Tibial artery (tissue), 4 donors: ENCODE measurements at regions of chr1 and their contacts with region 1.

Region 1: GRCh38 chr1:32351399-32352238 is 10.7 kb downstream of the FAM229A start:
- DNase-seq: peak; percentile 94 to 96
- H3K4me3 ChIP-seq: peak overlapping the region; percentile 59 to 84
- H3K27ac ChIP-seq: peak overlapping the region; percentile 86 to 94
- H3K4me1 ChIP-seq: peaks cover 0 to 21% (median 20%) of the 10 kb centered on the region in 4 donors
- H3K27me3 ChIP-seq: no peaks in the 10 kb centered on the region
- CTCF ChIP-seq: no peak

Region 2: GRCh38 chr1:32138943-32139342 is 212.7 kb before region 1 on chr1:
- intact Hi-C with region 1: no loop called
- DNase-seq: no peak
- H3K4me3 ChIP-seq: no peak overlapping the region
- H3K27ac ChIP-seq: no peak overlapping the region
- H3K4me1 ChIP-seq: peaks cover 0 to 26% (median 10%) of the 10 kb centered on the region in 4 donors
- H3K27me3 ChIP-seq: no peaks in the 10 kb centered on the region
- CTCF ChIP-seq: no peak

Region 3: DNA sequence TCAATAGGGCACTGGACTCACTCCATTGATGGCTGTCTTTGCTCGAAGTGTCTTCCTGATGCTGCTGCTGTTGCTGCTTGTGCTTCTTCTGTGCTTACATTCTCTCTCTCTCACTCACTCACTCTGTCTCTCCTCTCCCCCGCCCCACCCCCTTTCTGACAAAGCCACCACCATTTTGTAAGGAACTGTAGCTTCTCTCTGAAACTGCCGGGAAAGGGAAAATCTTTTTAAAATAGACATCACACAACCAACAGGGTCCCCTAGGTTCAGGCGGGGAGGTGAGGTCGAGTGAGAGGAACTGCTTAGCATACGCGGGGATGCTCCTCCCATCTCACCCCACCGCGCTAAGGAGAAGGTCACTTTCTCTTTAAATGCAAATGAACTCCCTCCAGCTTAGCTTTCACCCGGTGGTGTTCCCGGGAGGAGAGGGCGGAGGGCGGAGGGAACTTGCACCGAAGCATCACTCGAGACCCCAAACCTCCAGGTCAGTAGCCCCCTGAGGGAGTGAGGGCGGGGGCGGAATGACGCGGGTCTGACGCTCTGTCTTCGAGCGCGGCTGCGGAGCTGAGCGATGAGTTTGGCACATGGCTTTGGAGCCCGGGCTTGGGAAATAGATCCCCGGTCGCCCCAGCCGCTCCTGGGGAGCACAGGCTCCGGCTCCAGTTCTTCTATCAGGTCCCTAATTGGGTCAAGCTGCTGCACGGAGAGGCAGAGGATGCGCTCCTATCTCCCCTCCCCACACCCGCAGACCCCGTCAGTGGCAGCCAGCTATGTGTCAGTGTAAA is 151.2 kb before region 1 on chr1 and contains the start of gene CCDC28B:
- intact Hi-C with region 1: loop called (anchors 5 kb)
- DNase-seq: peak; percentile 62 to 87
- H3K4me3 ChIP-seq: peak within 1 kb of the TSS; percentile 58 to 70
- H3K27ac ChIP-seq: peak within 1 kb of the TSS; percentile 71 to 73
- H3K4me1 ChIP-seq: peaks cover 3 to 37% (median 28%) of the 10 kb centered on the region in 4 donors
- H3K27me3 ChIP-seq: no peaks in the 10 kb centered on the region
- CTCF ChIP-seq: no peak

Region 4: GRCh38 chr1:32247983-32248889 is 103.4 kb before region 1 on chr1:
- intact Hi-C with region 1: no loop called
- DNase-seq: peak; percentile 89 to 90
- H3K4me3 ChIP-seq: no peak overlapping the region
- H3K27ac ChIP-seq: no peak overlapping the region
- H3K4me1 ChIP-seq: peaks cover 0 to 27% (median 18%) of the 10 kb centered on the region in 4 donors
- H3K27me3 ChIP-seq: no peaks in the 10 kb centered on the region
- CTCF ChIP-seq: peak; percentile 67 to 81

Region 5: GRCh38 chr1:32291708-32292492 is 59.7 kb before region 1 on chr1 and contains the start of gene HDAC1:
- intact Hi-C with region 1: no loop called
- DNase-seq: peak; percentile 93 to 97
- H3K4me3 ChIP-seq: peak within 1 kb of the TSS; percentile 81 to 90
- H3K27ac ChIP-seq: peak within 1 kb of the TSS; percentile 89 to 90
- H3K4me1 ChIP-seq: peaks cover 0 to 15% (median 6%) of the 10 kb centered on the region in 4 donors
- H3K27me3 ChIP-seq: no peaks in the 10 kb centered on the region
- CTCF ChIP-seq: no peak